Activated T-helper 1 cell treated with anti-CD3 and anti-CD28 coated beads, Interleukin-12 subunit alpha, Interleukin-12 subunit beta, Interleukin-2, Interleukin-4 antibody, amounts not matched to agents 30 ng/mL and 10 ng/mL and 1 ng/mL, durations not matched to agents 14 hours and 24 hours and 36 hours (primary cell): ENCODE measurements at regions of chr20 and their contacts with region 1.

Region 1: GRCh38 chr20:63627129-63627750 is 339 bp upstream of the GMEB2 start:
- DNase-seq: peak; percentile 95
- H3K4me3 Mint-ChIP-seq: peak overlapping the region; percentile 100
- H3K27ac Mint-ChIP-seq: peak overlapping the region; percentile 98
- H3K4me1 Mint-ChIP-seq: peaks cover 23% of the 10 kb centered on the region
- H3K27me3 Mint-ChIP-seq: no peaks in the 10 kb centered on the region

Region 2: GRCh38 chr20:63216041-63216848 is 411.0 kb before region 1 on chr20 and contains the start of gene YTHDF1:
- intact Hi-C with region 1: loop called (anchors 2 kb)
- DNase-seq: peak; percentile 97
- H3K4me3 Mint-ChIP-seq: peak within 1 kb of the TSS; percentile 98
- H3K27ac Mint-ChIP-seq: peak within 1 kb of the TSS; percentile 89
- H3K4me1 Mint-ChIP-seq: peaks cover 47% of the 10 kb centered on the region
- H3K27me3 Mint-ChIP-seq: no peaks in the 10 kb centered on the region
- total RNA-seq, gene YTHDF1: 48.8 and 49.0 TPM in 2 replicates

Region 3: GRCh38 chr20:63553227-63553932 is 73.9 kb before region 1 on chr20:
- intact Hi-C with region 1: loop called (anchors 1 kb)
- DNase-seq: peak; percentile 86
- H3K4me3 Mint-ChIP-seq: peak overlapping the region; percentile 63
- H3K27ac Mint-ChIP-seq: peak overlapping the region; percentile 55
- H3K4me1 Mint-ChIP-seq: peaks cover 9% of the 10 kb centered on the region
- H3K27me3 Mint-ChIP-seq: peaks cover 19% of the 10 kb centered on the region

Region 4: DNA sequence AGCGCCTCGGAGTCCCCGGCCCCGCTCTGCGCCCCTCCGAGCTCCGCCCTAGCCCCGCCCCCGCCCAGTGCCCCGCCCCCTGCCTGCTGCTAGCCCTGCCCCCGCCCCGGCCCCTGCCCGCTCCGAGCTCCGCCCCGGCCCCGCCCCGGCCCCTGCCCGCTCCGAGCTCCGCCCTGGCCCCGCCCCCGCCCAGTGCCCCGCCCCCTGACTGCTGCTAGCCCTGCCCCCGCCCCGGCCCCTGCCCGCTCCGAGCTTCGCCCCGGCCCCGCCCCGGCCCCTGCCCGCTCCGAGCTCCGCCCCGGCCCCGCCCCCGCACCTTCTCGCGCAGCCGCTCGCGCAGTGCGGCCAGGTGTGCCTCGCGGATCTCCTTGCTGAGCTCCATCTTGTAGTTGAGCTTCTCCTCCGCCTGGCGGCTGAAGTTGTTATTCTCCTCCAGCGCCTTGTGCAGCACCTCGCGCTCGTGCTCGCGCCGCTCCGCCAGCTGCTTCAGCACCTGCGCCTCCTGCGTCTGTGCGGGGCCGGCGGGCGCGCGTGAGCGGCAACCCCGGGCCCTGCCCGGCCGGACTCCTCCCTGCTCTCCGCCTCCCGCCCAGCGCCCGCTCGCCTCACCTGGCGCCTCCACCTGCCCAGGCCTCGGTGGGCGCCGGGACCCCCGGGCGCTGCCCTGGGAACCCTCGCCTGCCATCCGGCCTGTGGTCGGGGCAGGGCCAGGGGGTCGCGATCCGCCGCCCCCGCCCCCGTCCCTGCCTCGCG is 14.7 kb after region 1 on chr20:
- intact Hi-C with region 1: loop called (anchors 2 kb)
- DNase-seq: peak; percentile 93
- H3K4me3 Mint-ChIP-seq: peak overlapping the region; percentile 57
- H3K27ac Mint-ChIP-seq: peak overlapping the region; percentile 70
- H3K4me1 Mint-ChIP-seq: peaks cover 21% of the 10 kb centered on the region
- H3K27me3 Mint-ChIP-seq: peaks cover 7% of the 10 kb centered on the region

Region 5: GRCh38 chr20:63707549-63708300 is 80.5 kb after region 1 on chr20 and contains the starts of genes ARFRP1 and ZGPAT:
- intact Hi-C with region 1: loop called (anchors 1 kb)
- DNase-seq: peak; percentile 88
- H3K4me3 Mint-ChIP-seq: peak within 1 kb of the TSS; percentile 94
- H3K27ac Mint-ChIP-seq: peak within 1 kb of the TSS; percentile 86
- H3K4me1 Mint-ChIP-seq: peaks cover 31% of the 10 kb centered on the region
- H3K27me3 Mint-ChIP-seq: no peaks in the 10 kb centered on the region
- total RNA-seq, gene ARFRP1: 71.8 and 73.5 TPM in 2 replicates
- total RNA-seq, gene ZGPAT: 34.5 and 36.7 TPM in 2 replicates

Region 6: GRCh38 chr20:63775096-63775978 is 148.1 kb after region 1 on chr20:
- intact Hi-C with region 1: no loop called
- DNase-seq: no peak
- H3K4me3 Mint-ChIP-seq: no peak overlapping the region
- H3K27ac Mint-ChIP-seq: no peak overlapping the region
- H3K4me1 Mint-ChIP-seq: no peaks in the 10 kb centered on the region
- H3K27me3 Mint-ChIP-seq: peaks cover 3% of the 10 kb centered on the region

Region 7: DNA sequence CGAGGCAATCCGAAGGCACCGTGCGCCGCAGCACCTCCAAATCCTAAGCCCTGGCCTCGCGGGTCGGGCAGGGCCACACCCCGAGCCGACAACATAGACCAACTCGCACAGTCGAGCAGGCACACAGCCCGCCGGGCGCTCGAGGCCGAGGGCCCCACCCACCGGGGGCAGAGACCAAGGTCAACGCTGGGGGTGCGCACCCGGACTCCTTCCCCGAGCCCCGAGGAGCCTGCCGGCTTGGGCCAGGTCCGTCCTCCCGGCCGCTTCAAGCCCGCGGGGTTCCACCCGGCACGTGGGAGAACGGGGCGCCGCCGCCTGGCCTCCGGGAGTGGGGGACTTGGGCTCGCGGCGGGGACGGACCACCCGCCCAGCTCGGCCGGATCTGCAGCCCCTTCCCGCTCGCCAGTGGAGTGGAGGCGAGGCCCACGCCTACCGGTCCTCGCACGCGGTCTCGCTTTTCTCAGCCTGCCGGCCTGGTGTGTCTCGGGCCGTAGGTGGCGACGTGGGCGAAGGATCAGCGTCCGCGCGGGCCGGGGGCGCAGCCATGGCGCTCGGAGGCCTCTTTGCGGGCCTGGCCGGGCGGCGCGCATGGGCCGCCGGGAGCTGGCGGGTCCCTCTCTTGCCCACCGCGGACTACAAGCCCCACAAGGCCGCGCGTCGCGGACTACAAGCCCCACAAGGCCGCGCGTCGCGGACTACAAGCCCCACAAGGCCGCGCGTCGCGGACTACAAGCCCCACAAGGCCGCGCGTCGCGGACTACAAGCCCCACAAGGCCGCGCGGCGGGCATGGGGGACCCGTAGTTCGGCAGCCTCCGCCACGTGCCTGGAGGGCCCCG is 328.8 kb after region 1 on chr20 and contains the start of gene UCKL1:
- intact Hi-C with region 1: loop called (anchors 5 kb)
- DNase-seq: peak; percentile 88
- H3K4me3 Mint-ChIP-seq: peak within 1 kb of the TSS; percentile 84
- H3K27ac Mint-ChIP-seq: peak within 1 kb of the TSS; percentile 93
- H3K4me1 Mint-ChIP-seq: peaks cover 19% of the 10 kb centered on the region
- H3K27me3 Mint-ChIP-seq: no peaks in the 10 kb centered on the region
- total RNA-seq, gene UCKL1: 48.7 and 49.3 TPM in 2 replicates